Activated naive CD8-positive, alpha-beta T cell treated with anti-CD3 and anti-CD28 coated beads, Interleukin-2, amount 10 ng/mL, durations not matched to agents 7 days and 5 days (primary cell): ENCODE measurements at regions of chr14 and their contacts with region 1.

Region 1: DNA sequence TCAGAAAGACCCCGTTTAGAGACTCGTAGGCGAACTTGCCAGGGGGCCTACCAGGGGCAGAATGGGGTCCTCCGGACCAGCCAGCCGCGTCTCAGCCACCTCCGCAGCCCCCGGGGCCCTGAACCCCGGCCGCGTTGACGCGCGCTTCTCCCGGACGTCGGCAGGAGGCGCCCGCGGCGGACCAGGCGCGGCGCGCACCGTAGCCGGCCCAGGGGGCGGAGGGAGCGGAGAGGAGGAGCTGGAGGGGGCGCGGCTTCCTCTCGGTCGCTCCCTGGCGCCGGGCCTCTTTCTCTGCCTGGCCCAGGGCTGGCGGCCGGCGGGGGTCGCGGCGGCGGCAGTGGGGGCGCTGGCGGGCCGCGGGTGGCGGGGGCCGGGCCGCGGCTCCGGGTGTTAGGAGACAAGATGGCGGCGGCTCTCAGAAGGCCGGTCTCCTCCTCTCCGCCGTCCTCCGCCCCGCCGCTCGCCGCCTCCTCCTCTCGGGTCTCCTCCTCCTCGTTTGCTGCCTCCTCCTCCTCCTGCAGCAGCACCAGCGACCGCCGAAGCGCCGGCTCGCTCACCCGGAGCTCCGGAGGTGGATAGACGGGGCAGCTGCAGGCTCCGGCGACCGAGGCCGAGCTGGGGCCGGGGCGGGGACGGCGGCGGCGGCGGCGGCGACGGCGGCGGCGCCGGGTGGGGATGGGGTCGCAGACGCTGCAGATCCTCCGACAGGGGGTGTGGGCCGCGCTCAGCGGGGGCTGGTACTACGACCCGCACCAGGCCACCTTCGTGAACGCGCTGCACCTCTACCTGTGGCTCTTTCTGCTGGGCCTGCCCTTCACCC is at the start of gene PCNX1:
- DNase-seq: peak; percentile 97
- ATAC-seq: peak; percentile 76
- H3K4me3 Mint-ChIP-seq: peak within 1 kb of the TSS; percentile 89
- H3K27ac Mint-ChIP-seq: peak within 1 kb of the TSS; percentile 96
- H3K4me1 Mint-ChIP-seq: peaks cover 44% of the 10 kb centered on the region
- H3K27me3 Mint-ChIP-seq: no peaks in the 10 kb centered on the region
- total RNA-seq, gene PCNX1: 80.0 to 93.0 TPM

Region 2: DNA sequence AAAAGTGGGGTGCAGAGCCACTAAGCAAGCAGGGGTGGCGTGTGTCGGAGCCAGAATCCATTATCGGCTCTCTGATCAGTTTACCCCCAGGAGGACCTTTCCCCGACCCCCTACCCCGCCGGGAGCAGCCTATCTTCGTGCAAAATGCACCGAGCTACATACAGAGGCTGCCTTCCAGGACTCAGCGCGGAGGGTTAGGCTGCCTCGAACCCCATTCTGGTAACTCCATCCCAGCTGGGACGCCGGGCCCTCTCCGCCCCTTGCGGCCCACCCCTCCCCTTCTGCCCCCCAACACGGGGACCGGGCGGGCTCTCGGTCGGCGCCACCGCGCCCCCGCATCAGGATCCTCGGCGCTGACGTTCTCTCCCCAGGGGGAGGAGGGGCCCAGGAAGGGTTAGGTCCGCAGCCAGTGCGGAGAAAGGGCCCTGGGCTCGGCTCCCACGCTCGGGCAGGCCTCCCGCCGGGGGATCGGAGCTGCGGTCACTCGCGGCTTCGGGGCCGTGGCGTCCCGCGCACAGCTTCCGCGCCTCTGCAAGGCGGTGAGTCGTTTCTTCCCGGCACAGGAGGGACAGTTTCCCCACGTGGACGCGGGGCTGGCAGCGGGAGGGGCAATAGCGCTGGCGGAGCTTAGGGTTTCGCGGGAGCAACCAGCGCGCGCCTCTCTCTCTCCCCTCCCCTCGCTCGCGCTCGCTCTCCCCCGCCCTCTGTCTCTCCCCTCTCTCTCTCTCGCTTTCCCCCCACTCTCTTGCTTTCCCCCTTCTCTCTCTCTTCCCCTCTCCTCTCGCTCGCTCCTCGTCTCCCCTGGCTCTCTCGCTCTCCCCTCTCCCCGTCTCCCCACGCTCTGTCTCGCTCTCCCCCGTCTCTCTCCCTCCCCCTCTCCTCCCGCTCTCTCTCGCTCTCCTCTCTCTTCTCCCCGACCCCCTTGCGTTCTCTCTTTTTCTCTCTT is 85.5 kb before region 1 on chr14:
- POLR2A ChIA-PET with region 1: interaction called, 12 read pairs
- DNase-seq: peak; percentile 69
- ATAC-seq: peak; percentile 51
- H3K4me3 Mint-ChIP-seq: peak overlapping the region; percentile 92
- H3K27ac Mint-ChIP-seq: peak overlapping the region; percentile 74
- H3K4me1 Mint-ChIP-seq: peaks cover 25% of the 10 kb centered on the region
- H3K27me3 Mint-ChIP-seq: peaks cover 20% of the 10 kb centered on the region

Region 3: GRCh38 chr14:70871863-70872677 is 35.3 kb before region 1 on chr14:
- POLR2A ChIA-PET with region 1: interaction called, 17 read pairs
- DNase-seq: peak; percentile 47
- ATAC-seq: peak; percentile 74
- H3K4me3 Mint-ChIP-seq: peak overlapping the region; percentile 80
- H3K27ac Mint-ChIP-seq: peak overlapping the region; percentile 95
- H3K4me1 Mint-ChIP-seq: peaks cover 31% of the 10 kb centered on the region
- H3K27me3 Mint-ChIP-seq: no peaks in the 10 kb centered on the region

Region 4: GRCh38 chr14:70887207-70887681 is 20.1 kb before region 1 on chr14:
- POLR2A ChIA-PET with region 1: interaction called, 132 read pairs
- DNase-seq: no peak
- ATAC-seq: peak; percentile 11
- H3K4me3 Mint-ChIP-seq: peak overlapping the region; percentile 78
- H3K27ac Mint-ChIP-seq: peak overlapping the region; percentile 97
- H3K4me1 Mint-ChIP-seq: peaks cover 77% of the 10 kb centered on the region
- H3K27me3 Mint-ChIP-seq: no peaks in the 10 kb centered on the region

Region 5: DNA sequence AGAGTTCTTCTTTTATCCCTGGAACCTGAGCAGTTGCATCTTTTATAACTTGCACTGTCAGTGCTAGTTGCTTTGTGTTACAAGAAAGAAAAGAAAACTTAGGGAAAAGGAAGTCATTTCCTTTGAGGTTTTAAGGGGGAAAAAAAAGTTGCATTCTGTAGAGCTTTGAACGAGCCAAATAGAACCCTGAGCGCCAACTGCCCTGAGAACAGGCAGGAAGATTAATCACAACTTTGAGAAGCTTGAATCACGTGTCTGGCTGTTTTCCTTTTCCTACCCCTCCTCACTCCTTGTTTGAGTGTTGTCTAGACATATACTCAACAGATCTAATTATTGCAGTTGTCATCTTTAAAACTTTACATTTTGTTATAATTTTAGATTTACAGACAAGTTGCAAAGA is 12.4 kb after region 1 on chr14:
- POLR2A ChIA-PET with region 1: interaction called, 11 read pairs
- DNase-seq: no peak
- ATAC-seq: peak; percentile 19
- H3K4me3 Mint-ChIP-seq: peak overlapping the region; percentile 60
- H3K27ac Mint-ChIP-seq: peak overlapping the region; percentile 76
- H3K4me1 Mint-ChIP-seq: peaks cover 64% of the 10 kb centered on the region
- H3K27me3 Mint-ChIP-seq: no peaks in the 10 kb centered on the region

Region 6: DNA sequence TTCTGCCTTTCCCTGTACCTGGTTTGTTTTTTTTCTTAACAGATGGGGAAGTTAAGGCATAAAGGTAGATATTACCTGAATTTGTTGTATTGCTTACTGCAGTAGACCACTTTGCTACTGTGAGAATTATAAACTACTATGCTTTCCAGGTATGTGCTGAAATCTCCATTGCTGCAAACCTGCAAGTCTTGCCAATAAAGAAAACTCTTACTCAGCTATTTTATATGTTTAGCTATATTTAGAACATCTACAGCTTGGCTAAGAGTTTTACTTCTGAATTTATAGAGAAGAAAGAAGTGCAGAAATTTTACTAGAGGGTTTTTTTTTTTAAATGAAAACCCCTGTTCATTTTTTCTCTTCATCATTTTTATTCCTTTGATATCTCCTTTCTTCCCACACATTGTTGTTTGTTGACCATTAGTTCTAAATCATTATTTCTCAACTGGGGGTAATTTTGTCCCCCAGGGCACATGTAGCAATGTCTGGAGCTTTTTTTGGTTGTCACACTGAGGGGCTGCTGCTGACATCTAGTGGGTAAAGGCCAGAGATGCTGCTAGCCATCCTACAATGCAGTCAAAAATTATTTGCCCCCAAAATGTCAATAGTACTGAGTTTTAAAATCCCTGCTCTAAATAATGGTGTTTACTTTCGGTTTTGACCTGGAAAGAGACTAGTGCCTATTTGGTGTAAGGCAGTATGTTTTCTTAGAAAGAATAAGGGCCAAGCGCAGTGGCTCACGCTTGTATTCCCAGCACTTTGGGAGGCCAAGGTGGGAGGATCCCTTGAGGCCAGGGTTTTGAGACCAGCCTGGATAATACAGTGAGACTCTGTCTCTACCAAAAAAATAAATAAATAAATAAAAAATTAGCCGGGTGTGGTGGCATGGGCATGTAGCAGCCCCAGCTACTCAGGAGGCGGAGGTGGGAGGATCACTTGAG is 48.4 kb after region 1 on chr14:
- POLR2A ChIA-PET with region 1: interaction called, 26 read pairs
- DNase-seq: no peak
- ATAC-seq: peak; percentile 67
- H3K4me3 Mint-ChIP-seq: no peak overlapping the region
- H3K27ac Mint-ChIP-seq: no peak overlapping the region
- H3K4me1 Mint-ChIP-seq: peaks cover 16% of the 10 kb centered on the region
- H3K27me3 Mint-ChIP-seq: no peaks in the 10 kb centered on the region